Tibial artery (tissue), 4 donors: ENCODE measurements at regions of chr18 and their contacts with region 1.

Region 1: GRCh38 chr18:23812546-23813440 is 123.5 kb downstream of the LAMA3 start:
- DNase-seq: no peak
- H3K4me3 ChIP-seq: no peak overlapping the region
- H3K27ac ChIP-seq: no peak overlapping the region
- H3K4me1 ChIP-seq: no peaks in the 10 kb centered on the region
- H3K27me3 ChIP-seq: no peaks in the 10 kb centered on the region
- CTCF ChIP-seq: peak; percentile 53 to 59

Region 2: GRCh38 chr18:23623040-23623439 is 189.8 kb before region 1 on chr18:
- intact Hi-C with region 1: loop called (anchors 5 kb)
- DNase-seq: no peak
- H3K4me3 ChIP-seq: no peak overlapping the region
- H3K27ac ChIP-seq: no peak overlapping the region
- H3K4me1 ChIP-seq: peaks cover 0 to 25% (median 12%) of the 10 kb centered on the region in 4 donors
- H3K27me3 ChIP-seq: peaks cover 0 to 18% of the 10 kb centered on the region in 2 donors
- CTCF ChIP-seq: no peak

Region 3: DNA sequence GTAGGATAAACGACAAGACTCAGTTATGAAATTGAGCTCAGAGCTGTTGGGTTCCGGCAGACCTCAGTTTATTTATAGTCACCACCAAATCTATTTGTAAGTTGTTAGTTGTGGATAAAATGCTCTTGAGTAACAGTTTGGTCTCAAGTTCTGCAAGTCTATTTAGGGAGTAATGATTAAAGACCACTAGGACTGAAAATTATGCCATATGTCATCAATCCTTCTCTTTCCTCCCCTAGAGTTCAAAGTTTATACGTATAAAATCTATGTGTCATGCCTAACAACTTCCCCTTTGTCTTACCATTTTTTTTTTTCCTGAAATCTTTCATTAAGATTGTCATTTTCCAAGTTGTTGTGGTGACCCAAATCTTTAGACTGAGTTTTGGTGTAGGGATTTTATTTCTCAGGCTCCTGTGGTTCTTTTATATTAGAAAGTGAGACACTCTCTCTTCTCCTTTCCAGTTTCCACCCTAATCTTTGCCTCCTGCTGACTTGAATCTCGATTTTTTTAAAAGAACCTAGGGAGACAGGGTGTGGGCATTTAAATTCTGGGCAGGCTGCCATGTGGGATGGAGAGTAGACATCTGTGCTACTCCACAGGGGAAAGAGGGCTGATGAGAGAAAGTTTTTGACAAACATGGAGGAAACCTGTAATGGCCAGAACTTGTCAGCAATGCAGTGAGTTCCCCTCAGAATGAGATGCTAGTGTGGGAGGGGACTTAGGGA is 72.5 kb before region 1 on chr18:
- intact Hi-C with region 1: no loop called
- DNase-seq: no peak
- H3K4me3 ChIP-seq: no peak overlapping the region
- H3K27ac ChIP-seq: no peak overlapping the region
- H3K4me1 ChIP-seq: peaks cover 0 to 5% (median 0%) of the 10 kb centered on the region in 4 donors
- H3K27me3 ChIP-seq: no peaks in the 10 kb centered on the region
- CTCF ChIP-seq: no peak

Region 4: GRCh38 chr18:23900994-23901393 is 88.2 kb after region 1 on chr18:
- intact Hi-C with region 1: loop called (anchors 10 kb)
- DNase-seq: no peak
- H3K4me3 ChIP-seq: no peak overlapping the region
- H3K27ac ChIP-seq: no peak overlapping the region
- H3K4me1 ChIP-seq: no peaks in the 10 kb centered on the region
- H3K27me3 ChIP-seq: no peaks in the 10 kb centered on the region
- CTCF ChIP-seq: no peak

Region 5: GRCh38 chr18:24930971-24931370 is 1118.2 kb after region 1 on chr18:
- intact Hi-C with region 1: no loop called
- DNase-seq: no peak
- H3K4me3 ChIP-seq: no peak overlapping the region
- H3K27ac ChIP-seq: no peak overlapping the region
- H3K4me1 ChIP-seq: no peaks in the 10 kb centered on the region
- H3K27me3 ChIP-seq: no peaks in the 10 kb centered on the region
- CTCF ChIP-seq: no peak